Activated CD8-positive, alpha-beta T cell treated with anti-CD3 and anti-CD28 coated beads for 36 hours (primary cell): ENCODE measurements at regions of chr6 and their contacts with region 1.

Region 1: GRCh38 chr6:24855395-24856245 is 56.9 kb upstream of the ARMH2 start:
- DNase-seq: peak; percentile 83
- ATAC-seq: peak; percentile 68
- H3K4me3 Mint-ChIP-seq: peak overlapping the region; percentile 22
- H3K27ac Mint-ChIP-seq: peak overlapping the region; percentile 87
- H3K4me1 Mint-ChIP-seq: peaks cover 61% of the 10 kb centered on the region
- H3K27me3 Mint-ChIP-seq: no peaks in the 10 kb centered on the region
- CTCF ChIP-seq: peak; percentile 88

Region 2: DNA sequence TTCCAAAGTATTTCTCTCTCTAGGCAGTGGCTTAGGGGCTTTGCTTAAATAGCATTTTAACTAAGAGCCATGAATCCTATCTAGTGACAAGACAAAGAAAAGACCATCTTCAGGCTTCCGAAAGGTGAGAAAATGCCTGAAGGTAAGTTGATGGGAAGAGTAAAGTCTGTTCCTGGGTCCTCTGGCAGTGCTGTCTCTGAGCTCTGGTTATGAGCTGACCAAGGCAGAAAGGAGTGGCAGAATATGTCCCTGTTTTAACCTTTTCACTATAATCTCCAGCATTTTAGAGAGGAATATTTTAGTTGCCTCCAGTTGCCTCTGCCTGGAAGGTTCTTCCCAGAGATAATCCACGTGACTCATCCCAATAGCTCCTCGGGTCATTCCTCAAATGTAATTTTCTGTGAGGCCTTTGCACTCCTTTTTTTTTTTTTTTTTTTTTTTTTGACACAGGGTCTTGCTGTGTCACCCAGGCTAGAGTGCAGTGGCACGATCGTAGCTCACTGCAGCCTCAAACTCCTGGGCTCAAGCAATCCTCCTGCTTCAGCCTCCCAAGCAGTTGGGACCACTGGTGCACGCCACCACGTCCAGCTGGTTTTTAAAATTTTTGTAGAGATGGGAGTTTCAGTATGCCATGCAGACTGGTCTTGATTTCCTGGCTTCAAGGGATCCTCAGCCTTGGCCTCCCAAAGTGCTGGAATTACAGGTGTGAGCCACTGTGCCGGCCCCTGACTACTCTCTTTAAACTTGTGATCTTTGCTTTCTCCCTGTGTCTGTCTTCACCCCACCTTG is 53.2 kb before region 1 on chr6:
- CTCF ChIA-PET with region 1: no interaction called
- POLR2A ChIA-PET with region 1: no interaction called
- intact Hi-C with region 1: no loop called
- DNase-seq: no peak
- ATAC-seq: no peak
- H3K4me3 Mint-ChIP-seq: no peak overlapping the region
- H3K27ac Mint-ChIP-seq: peak overlapping the region; percentile 7
- H3K4me1 Mint-ChIP-seq: peaks cover 16% of the 10 kb centered on the region
- H3K27me3 Mint-ChIP-seq: no peaks in the 10 kb centered on the region
- CTCF ChIP-seq: no peak

Region 3: DNA sequence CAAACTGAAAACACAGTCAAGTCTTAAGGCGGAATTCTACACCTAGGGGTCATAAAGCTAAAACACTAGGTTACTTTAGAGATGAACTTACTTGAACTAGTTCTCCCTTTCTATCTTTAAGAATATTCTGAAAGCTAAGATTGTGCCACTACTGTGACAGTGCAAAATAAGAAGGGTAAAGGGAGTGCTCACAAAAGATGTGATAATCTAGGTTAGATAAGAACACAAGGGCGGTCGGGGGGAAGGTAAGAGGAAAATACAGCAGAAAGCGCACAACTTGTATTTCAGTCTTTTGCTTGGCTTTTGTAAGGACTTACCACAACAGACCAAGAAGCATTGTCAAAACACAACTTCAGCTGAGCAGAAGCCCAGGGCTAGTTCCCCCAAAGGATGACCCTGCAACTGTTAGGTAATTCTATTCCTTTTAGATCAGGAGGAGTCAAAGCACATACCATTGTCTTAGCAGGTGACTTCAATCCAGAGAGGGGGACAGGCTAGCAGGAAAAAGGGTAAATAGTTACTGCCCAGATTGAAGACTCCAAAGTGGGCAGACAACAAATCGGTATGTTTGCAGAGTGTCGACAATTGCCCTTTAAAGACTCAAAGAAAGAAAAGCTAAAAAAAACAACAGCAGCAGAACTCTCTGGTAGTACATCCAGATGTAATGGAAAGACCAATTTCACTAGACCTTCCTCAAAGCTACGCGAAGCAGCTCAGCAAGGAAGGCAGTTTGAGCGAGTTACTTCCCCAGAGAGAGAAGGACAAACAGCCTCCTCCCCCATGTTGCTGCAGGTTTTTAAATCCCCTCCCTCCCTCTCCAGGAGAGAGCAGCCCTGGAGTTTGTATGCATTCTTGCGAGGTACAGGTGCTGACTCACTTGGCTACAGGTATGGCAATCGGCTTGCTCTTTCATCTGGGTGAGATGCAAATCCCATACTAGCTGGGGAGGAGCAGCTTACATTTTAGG is 21.2 kb after region 1 on chr6:
- CTCF ChIA-PET with region 1: interaction called, 11 read pairs
- POLR2A ChIA-PET with region 1: interaction called, 5 read pairs
- intact Hi-C with region 1: no loop called
- DNase-seq: no peak
- ATAC-seq: no peak
- H3K4me3 Mint-ChIP-seq: no peak overlapping the region
- H3K27ac Mint-ChIP-seq: peak overlapping the region; percentile 71
- H3K4me1 Mint-ChIP-seq: peaks cover 60% of the 10 kb centered on the region
- H3K27me3 Mint-ChIP-seq: no peaks in the 10 kb centered on the region
- CTCF ChIP-seq: no peak

Region 4: DNA sequence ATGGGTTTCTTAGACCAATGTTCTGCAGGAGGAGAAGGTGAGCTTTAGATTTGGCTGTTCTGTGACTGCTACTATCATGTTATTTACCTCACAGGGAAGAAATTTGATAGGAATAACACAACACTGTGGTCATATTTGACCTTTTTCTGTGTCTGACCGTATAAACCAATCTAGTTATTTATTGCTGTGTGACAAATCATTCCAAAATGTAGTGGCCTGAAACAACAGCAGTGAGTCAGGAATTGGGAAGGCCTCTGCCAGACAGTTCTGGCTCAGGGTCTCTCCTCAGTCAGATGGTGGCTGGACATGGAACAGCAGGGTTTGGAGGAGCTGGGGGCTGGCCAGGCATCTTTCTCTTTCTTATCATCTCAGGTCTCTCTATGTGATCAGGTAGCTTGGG is 47.2 kb after region 1 on chr6:
- CTCF ChIA-PET with region 1: interaction called, 52 read pairs
- POLR2A ChIA-PET with region 1: interaction called, 28 read pairs
- intact Hi-C with region 1: no loop called
- DNase-seq: no peak
- ATAC-seq: no peak
- H3K4me3 Mint-ChIP-seq: no peak overlapping the region
- H3K27ac Mint-ChIP-seq: peak overlapping the region; percentile 87
- H3K4me1 Mint-ChIP-seq: peaks cover 90% of the 10 kb centered on the region
- H3K27me3 Mint-ChIP-seq: no peaks in the 10 kb centered on the region
- CTCF ChIP-seq: no peak

Region 5: DNA sequence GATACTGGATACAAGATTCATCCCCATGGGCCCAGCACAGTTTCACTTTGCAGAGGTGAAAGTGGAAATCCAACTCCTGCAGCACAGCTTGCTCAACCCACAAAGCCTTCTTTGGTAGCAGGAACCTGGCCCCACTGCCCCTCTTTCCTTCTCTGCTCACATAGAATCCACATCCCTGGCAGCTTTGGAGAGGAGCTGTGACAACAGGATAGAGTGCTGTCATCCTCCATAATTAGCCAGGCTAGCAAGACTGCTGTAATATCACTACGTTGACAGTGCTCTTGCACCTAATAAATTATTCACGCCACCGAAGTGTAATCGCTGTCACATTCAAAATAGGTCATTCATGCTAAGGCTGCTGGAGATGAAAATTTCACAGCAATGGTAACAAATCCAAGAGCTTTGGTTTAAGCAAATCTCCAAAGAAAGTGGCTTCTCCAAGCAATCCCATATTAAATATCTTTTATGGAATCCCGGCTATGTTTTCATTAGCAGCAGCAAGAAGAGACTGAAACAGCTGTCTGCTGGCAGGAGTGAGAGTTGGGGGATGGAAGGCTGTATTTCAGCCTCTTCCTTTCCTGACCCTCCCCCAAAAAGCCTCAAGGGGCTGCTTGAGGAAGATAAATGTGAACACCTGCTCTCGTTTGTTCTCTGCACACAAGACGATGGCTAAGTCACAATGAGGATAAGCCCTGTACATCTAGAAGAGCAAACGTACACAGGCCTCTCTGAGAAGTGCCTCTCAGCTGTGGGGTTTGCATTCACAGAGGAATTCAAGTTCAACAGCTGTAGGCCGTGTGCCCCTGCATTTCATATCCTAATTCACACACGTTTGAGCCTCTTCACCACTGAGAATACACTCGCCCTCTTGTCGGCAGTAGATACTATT is 63.6 kb after region 1 on chr6:
- CTCF ChIA-PET with region 1: interaction called, 22 read pairs
- POLR2A ChIA-PET with region 1: interaction called, 6 read pairs
- intact Hi-C with region 1: no loop called
- DNase-seq: peak; percentile 46
- ATAC-seq: peak; percentile 11
- H3K4me3 Mint-ChIP-seq: peak overlapping the region; percentile 69
- H3K27ac Mint-ChIP-seq: peak overlapping the region; percentile 94
- H3K4me1 Mint-ChIP-seq: peaks cover 82% of the 10 kb centered on the region
- H3K27me3 Mint-ChIP-seq: no peaks in the 10 kb centered on the region
- CTCF ChIP-seq: no peak

Region 6: GRCh38 chr6:24974182-24975171 is 118.9 kb after region 1 on chr6:
- CTCF ChIA-PET with region 1: interaction called, 8 read pairs
- POLR2A ChIA-PET with region 1: interaction called, 10 read pairs
- intact Hi-C with region 1: no loop called
- DNase-seq: peak; percentile 70
- ATAC-seq: peak; percentile 90
- H3K4me3 Mint-ChIP-seq: peak overlapping the region; percentile 41
- H3K27ac Mint-ChIP-seq: peak overlapping the region; percentile 92
- H3K4me1 Mint-ChIP-seq: peaks cover 49% of the 10 kb centered on the region
- H3K27me3 Mint-ChIP-seq: no peaks in the 10 kb centered on the region
- CTCF ChIP-seq: no peak

Region 7: DNA sequence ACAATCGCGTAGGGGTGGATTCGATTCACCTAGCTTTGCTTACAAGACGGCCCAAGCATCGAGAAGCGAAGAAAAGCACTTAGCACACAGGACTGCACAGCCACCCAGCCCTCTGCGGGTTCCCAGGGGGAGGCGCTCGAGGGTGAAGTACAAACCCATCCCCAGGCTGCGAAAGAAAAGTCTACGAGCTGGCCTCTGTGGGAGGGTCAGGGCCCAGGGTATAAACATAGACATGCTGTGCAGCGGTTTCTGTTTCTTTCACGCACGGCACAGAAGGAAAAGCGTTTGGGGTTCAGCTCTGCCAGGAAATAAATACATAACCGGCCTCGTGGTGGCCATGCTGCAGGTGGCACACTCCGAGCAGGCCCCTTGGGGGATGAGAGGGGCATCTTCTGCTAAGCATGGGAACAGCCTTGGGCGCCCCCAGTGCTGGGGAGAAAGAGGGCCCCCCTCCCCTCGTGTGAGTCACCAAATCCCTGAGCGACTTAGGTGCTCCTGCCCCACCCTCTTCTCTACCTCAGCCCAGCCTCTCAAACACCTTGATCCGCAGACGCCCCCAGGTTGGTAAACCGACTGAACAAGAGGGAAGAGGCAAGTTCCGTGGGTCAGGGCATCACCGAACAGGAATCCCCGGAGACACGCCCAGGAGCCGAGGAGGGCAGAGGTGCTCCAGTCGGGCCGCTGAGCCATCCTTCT is 171.7 kb after region 1 on chr6:
- CTCF ChIA-PET with region 1: interaction called, 31 read pairs
- POLR2A ChIA-PET with region 1: no interaction called
- intact Hi-C with region 1: no loop called
- DNase-seq: peak; percentile 90
- ATAC-seq: peak; percentile 96
- H3K4me3 Mint-ChIP-seq: peak overlapping the region; percentile 65
- H3K27ac Mint-ChIP-seq: peak overlapping the region; percentile 81
- H3K4me1 Mint-ChIP-seq: peaks cover 45% of the 10 kb centered on the region
- H3K27me3 Mint-ChIP-seq: no peaks in the 10 kb centered on the region
- CTCF ChIP-seq: peak; percentile 42